PC-3 (cell line): ENCODE measurements at regions of chr6 and their contacts with region 1.

Region 1: GRCh38 chr6:15441215-15441868 is 195.5 kb downstream of the JARID2 start:
- DNase-seq: peak; percentile 83
- ATAC-seq: peak; percentile 65
- H3K4me3 ChIP-seq: no peak overlapping the region
- H3K27ac ChIP-seq: no peak overlapping the region
- H3K4me1 ChIP-seq: peaks cover 21% of the 10 kb centered on the region
- H3K27me3 ChIP-seq: no peaks in the 10 kb centered on the region
- CTCF ChIP-seq: peak; percentile 86

Region 2: DNA sequence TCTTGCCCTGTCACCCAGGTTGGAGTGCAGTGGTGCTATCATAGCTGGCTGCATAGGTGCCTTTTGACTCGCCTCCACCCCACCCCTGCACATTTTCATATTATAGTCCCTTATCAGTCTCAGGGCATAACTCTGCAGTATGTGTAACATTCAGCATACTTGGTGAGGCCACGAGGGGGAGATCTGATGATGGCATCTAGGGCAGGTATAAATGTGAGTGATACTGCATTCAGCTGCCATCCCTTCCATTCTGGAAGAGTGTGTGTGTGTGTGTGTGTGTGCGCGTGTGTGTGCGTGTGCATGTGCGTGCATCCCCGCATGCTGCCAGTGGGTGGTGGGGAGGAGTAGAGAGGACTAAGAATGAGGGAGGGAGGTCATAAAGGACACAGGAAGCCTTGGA is 114.1 kb before region 1 on chr6:
- CTCF ChIA-PET with region 1: no interaction called
- POLR2A ChIA-PET with region 1: no interaction called
- intact Hi-C with region 1: loop called (anchors 10 kb)
- DNase-seq: peak; percentile 37
- ATAC-seq: peak; percentile 38
- H3K4me3 ChIP-seq: no peak overlapping the region
- H3K27ac ChIP-seq: no peak overlapping the region
- H3K4me1 ChIP-seq: peaks cover 45% of the 10 kb centered on the region
- H3K27me3 ChIP-seq: no peaks in the 10 kb centered on the region
- CTCF ChIP-seq: peak; percentile 50

Region 3: GRCh38 chr6:15399641-15400470 is 41.5 kb before region 1 on chr6:
- CTCF ChIA-PET with region 1: no interaction called
- POLR2A ChIA-PET with region 1: no interaction called
- intact Hi-C with region 1: loop called (anchors 1 kb)
- DNase-seq: peak; percentile 69
- ATAC-seq: peak; percentile 80
- H3K4me3 ChIP-seq: peak overlapping the region; percentile 60
- H3K27ac ChIP-seq: peak overlapping the region; percentile 32; the same call in 1 of the 2 replicates
- H3K4me1 ChIP-seq: peaks cover 29% of the 10 kb centered on the region
- H3K27me3 ChIP-seq: no peaks in the 10 kb centered on the region
- CTCF ChIP-seq: no peak

Region 4: GRCh38 chr6:15491255-15491985 is 50.1 kb after region 1 on chr6:
- CTCF ChIA-PET with region 1: interaction called, 3 read pairs
- POLR2A ChIA-PET with region 1: no interaction called
- intact Hi-C with region 1: loop called (anchors 2 kb)
- DNase-seq: peak; percentile 72
- ATAC-seq: peak; percentile 82
- H3K4me3 ChIP-seq: no peak overlapping the region
- H3K27ac ChIP-seq: no peak overlapping the region
- H3K4me1 ChIP-seq: no peaks in the 10 kb centered on the region
- H3K27me3 ChIP-seq: no peaks in the 10 kb centered on the region
- CTCF ChIP-seq: peak; percentile 95

Region 5: GRCh38 chr6:15628499-15629131 is 187.3 kb after region 1 on chr6:
- CTCF ChIA-PET with region 1: no interaction called
- POLR2A ChIA-PET with region 1: no interaction called
- intact Hi-C with region 1: loop called (anchors 5 kb)
- DNase-seq: peak; percentile 13
- ATAC-seq: no peak
- H3K4me3 ChIP-seq: no peak overlapping the region
- H3K27ac ChIP-seq: no peak overlapping the region
- H3K4me1 ChIP-seq: peaks cover 9% of the 10 kb centered on the region
- H3K27me3 ChIP-seq: no peaks in the 10 kb centered on the region
- CTCF ChIP-seq: no peak